BJ (cell line): ENCODE measurements at regions of chr4 and their contacts with region 1.

Region 1: DNA sequence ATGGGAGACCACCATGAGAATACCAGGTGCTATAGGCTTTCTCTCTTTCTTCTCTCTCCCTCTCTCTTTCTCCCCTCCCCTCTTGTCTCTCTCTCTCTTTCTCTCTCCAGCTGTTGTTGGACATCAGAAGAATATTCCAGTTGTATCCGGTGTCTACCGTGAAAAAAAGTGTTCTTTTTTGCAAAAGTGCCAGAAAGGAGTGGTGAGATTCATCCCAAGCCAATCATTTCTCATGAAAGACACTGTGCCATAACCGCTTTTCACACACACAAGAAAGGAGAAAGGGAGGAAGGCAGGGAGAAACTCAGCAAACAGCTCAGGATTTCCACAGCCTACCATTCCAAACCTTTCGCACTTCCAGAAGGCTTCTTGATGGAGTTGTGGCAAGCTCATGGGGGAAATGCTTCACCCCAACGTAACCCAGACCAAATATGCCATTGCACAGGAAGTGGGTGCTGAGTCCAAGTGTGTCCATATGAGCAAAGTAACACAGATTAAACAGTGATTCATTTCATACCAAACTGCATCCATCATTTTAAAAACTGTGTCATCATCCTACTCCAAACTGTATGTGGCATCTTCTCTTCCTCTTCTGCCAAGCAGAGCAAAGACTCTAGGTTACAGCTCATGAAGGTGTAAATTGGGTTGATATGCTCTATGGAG is 224.0 kb downstream of the APBB2 start:
- DNase-seq: peak; percentile 94
- H3K4me3 ChIP-seq: no peak overlapping the region
- H3K27me3 ChIP-seq: no peaks in the 10 kb centered on the region
- CTCF ChIP-seq: no peak

Region 2: DNA sequence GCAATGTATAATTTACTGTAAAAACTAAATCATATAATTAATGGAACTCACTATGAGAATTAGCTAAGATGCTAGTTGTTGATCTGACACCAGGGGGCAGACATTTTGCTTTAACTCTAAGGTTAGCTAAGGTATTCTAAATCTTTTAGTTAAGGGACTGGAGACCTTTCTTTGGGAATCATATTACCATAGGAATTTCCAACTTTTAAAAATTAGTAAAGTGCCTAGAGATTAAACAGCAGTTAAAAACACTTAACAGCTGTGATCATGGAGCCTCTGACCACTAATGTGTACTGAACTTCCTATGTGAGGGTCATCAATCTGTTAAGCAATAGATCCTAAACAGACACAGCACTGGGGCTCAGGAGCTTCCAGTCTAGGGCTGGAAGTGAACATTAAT is 14.0 kb before region 1 on chr4:
- CTCF ChIA-PET with region 1: interaction called, 21 read pairs
- POLR2A ChIA-PET with region 1: no interaction called
- DNase-seq: no peak
- H3K4me3 ChIP-seq: no peak overlapping the region
- H3K27me3 ChIP-seq: no peaks in the 10 kb centered on the region
- CTCF ChIP-seq: peak; percentile 62

Region 3: GRCh38 chr4:41318867-41319535 is 328.6 kb after region 1 on chr4:
- CTCF ChIA-PET with region 1: no interaction called
- POLR2A ChIA-PET with region 1: no interaction called
- DNase-seq: no peak
- H3K4me3 ChIP-seq: no peak overlapping the region
- H3K27me3 ChIP-seq: no peaks in the 10 kb centered on the region
- CTCF ChIP-seq: no peak